ENCODE measurements at regions of chr14 and their contacts with region 1.

Region 1: DNA sequence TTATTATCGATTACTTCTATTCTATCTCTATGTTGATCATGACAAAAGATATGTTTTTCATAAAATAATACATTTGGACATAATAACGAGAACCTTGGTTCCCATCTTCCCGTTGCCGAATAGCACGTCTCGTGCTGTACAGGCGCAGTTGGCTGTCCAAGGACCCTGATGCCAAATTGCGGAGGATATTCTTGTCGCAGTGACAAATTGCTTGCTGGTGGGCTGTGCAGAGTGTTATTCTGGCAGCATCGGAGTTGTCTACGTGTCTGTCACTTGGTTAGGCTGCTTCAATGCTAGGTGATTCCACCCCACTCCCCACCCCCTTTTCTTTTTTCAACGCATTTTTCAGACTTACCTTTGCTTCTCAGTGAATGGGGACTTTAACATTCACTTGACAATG is 546.8 kb downstream of the PRKD1 start:
- DNase-seq: no peak
- ATAC-seq: no peak
- H3K4me3 ChIP-seq: no peak overlapping the region
- H3K27ac ChIP-seq: no peak overlapping the region
- H3K4me1 ChIP-seq: no peaks in the 10 kb centered on the region
- H3K27me3 ChIP-seq: no peaks in the 10 kb centered on the region
- CTCF ChIP-seq: no peak

Region 2: DNA sequence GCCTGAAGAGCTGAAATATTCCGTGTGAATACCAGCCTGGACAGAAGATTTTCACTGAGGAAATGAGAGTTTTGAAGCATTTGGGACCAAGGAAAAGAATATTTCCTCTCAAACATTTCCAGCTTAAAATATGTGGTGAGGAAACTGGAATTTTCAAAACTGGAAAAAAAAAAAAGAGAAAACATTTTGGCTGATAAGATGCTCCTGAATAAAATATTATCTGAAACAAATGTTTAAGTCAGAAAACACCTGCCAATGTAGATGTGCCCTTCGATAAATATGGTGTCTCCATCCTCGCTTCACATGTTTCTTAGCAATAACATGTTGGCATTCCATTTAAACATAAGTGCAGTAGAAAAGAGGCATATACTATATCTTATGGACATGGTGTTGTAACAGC is 20.2 kb before region 1 on chr14:
- CTCF ChIA-PET with region 1: interaction called, 10 read pairs
- POLR2A ChIA-PET with region 1: no interaction called
- in situ Hi-C with region 1: no loop called
- intact Hi-C with region 1: no loop called
- DNase-seq: no peak
- ATAC-seq: no peak
- H3K4me3 ChIP-seq: no peak overlapping the region
- H3K27ac ChIP-seq: no peak overlapping the region
- H3K4me1 ChIP-seq: no peaks in the 10 kb centered on the region
- H3K27me3 ChIP-seq: no peaks in the 10 kb centered on the region
- CTCF ChIP-seq: no peak